Activated CD4-positive, alpha-beta T cell treated with anti-CD3 and anti-CD28 coated beads for 36 hours (primary cell): ENCODE measurements at regions of chr2 and their contacts with region 1.

Region 1: DNA sequence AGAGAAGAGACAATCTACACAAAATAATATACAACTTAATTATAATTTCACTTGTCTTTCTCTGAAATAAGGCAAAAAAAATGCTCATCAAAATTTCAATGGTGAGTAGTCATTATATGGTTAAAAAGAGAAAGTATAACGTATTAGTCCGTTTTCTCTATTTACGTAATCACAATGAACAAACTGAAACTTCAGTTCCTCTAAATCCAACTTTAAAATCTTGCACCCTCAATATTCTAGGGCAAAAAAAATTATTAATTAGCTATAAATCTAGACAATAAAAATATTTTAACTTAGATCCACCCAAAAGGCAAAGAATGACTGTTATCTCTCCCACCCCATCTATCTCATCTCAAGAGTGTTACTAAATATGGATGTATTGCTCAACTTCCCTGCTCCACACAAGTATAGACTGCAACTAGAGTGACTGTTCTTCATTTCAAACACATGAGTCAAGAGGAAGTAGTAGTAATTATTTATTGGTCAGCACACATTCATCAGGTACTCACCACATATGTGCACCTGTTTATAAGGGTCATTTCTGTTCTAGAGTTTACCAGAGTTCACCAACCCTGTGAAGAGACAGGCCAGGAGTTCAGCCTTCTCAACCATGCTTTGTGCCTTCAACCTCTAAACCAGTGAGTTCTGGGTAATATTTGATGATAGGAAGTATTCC is 36.4 kb downstream of the STK39 start:
- DNase-seq: no peak
- ATAC-seq: peak; percentile 62
- H3K4me3 Mint-ChIP-seq: peak overlapping the region; percentile 29
- H3K27ac Mint-ChIP-seq: peak overlapping the region; percentile 99
- H3K4me1 Mint-ChIP-seq: peaks cover 75% of the 10 kb centered on the region
- H3K27me3 Mint-ChIP-seq: no peaks in the 10 kb centered on the region

Region 2: DNA sequence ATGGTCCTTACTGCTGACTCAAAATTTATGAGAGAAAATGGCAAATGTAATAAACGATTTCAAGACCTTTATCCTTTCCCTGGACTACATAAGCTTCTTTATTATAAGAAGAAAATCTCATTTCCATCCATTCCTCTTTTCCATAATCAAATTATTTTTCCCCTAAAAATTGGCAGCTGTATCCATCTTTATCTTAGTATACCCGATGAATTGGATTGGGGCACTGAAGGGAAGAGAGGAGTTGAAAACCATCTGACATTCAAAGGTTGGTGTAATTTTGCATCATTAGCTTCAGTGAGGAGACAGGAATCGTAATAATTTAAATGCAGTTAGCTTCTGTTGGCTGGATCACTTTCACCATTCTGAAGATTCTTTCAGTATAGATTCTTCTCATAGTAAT is 748.7 kb before region 1 on chr2:
- CTCF ChIA-PET with region 1: no interaction called
- POLR2A ChIA-PET with region 1: no interaction called
- intact Hi-C with region 1: no loop called
- DNase-seq: no peak
- ATAC-seq: no peak
- H3K4me3 Mint-ChIP-seq: no peak overlapping the region
- H3K27ac Mint-ChIP-seq: no peak overlapping the region
- H3K4me1 Mint-ChIP-seq: no peaks in the 10 kb centered on the region
- H3K27me3 Mint-ChIP-seq: no peaks in the 10 kb centered on the region

Region 3: DNA sequence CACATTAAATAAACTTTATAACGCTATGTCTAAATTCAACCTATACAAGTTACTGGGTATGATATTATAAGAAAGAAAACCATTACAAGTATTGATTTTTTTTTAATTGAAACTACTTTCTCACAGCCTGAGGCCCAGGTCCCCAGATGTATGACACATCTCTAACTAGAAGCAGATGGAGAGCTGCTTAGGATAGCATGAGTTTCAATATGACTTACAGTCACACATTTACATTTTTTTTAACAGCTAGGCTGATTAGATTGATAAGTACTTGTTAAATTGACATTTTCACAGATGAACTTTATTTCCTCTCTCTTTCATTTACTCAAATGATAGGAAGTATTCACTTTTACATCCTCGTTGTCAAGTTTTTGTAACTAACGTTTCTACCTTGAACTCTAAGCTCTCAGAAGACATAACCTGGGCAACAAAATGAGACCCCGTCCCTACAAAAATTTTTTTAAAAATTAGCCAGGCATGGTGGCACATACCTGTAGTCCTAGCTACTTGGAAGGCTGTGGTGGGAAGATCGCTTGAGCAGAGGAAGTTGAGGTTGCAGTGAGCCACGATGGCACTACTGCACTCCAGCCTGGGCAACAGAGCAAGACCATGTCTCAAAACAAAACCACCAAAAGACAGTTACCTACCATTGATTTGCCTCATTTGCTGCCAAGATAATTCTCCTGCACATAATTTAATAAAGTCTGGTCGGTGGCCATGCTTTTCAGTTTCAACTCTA is 16.1 kb before region 1 on chr2:
- CTCF ChIA-PET with region 1: interaction called, 20 read pairs
- POLR2A ChIA-PET with region 1: interaction called, 18 read pairs
- intact Hi-C with region 1: loop called (anchors 1 kb)
- DNase-seq: peak; percentile 62
- ATAC-seq: peak; percentile 85
- H3K4me3 Mint-ChIP-seq: peak overlapping the region; percentile 54
- H3K27ac Mint-ChIP-seq: peak overlapping the region; percentile 95
- H3K4me1 Mint-ChIP-seq: peaks cover 80% of the 10 kb centered on the region
- H3K27me3 Mint-ChIP-seq: no peaks in the 10 kb centered on the region

Region 4: GRCh38 chr2:168233762-168234406 is 22.9 kb after region 1 on chr2:
- CTCF ChIA-PET with region 1: interaction called, 3 read pairs
- POLR2A ChIA-PET with region 1: interaction called, 6 read pairs
- intact Hi-C with region 1: loop called (anchors 1 kb)
- DNase-seq: no peak
- ATAC-seq: peak; percentile 81
- H3K4me3 Mint-ChIP-seq: no peak overlapping the region
- H3K27ac Mint-ChIP-seq: peak overlapping the region; percentile 85
- H3K4me1 Mint-ChIP-seq: peaks cover 43% of the 10 kb centered on the region
- H3K27me3 Mint-ChIP-seq: no peaks in the 10 kb centered on the region

Region 5: DNA sequence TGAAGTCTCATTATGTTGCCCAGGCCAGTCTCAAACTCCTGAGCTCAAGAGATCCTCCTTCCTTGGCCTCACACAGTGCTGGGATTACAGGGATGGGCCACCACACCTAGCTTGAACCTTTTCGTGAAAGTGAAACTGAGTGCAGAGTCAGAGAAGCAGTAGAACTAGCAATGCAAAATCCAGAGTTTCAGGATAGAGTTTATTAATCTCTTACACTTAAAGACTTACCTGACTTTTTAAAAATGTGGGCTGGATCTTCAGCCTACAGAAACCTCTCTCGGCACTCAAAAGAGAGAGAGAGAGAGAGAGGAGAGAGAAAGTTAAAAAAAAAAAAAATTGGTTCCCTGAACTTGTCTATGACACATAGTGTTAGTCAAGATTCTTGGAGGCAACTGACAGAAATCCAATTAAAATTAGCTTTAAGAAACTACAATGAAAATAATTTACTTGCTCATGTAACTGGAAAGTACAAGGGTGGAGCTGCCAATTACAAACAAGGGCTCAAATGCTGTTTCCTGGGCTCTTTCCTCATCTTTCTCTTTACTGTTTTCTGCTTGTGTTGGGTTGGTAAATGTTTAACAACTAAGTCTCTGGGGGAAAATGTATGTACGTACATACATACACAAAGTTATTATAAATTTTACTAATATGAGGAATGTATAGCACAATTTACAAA is 146.9 kb after region 1 on chr2:
- CTCF ChIA-PET with region 1: no interaction called
- POLR2A ChIA-PET with region 1: no interaction called
- intact Hi-C with region 1: no loop called
- DNase-seq: no peak
- ATAC-seq: no peak
- H3K4me3 Mint-ChIP-seq: no peak overlapping the region
- H3K27ac Mint-ChIP-seq: no peak overlapping the region
- H3K4me1 Mint-ChIP-seq: peaks cover 24% of the 10 kb centered on the region
- H3K27me3 Mint-ChIP-seq: no peaks in the 10 kb centered on the region

Region 6: DNA sequence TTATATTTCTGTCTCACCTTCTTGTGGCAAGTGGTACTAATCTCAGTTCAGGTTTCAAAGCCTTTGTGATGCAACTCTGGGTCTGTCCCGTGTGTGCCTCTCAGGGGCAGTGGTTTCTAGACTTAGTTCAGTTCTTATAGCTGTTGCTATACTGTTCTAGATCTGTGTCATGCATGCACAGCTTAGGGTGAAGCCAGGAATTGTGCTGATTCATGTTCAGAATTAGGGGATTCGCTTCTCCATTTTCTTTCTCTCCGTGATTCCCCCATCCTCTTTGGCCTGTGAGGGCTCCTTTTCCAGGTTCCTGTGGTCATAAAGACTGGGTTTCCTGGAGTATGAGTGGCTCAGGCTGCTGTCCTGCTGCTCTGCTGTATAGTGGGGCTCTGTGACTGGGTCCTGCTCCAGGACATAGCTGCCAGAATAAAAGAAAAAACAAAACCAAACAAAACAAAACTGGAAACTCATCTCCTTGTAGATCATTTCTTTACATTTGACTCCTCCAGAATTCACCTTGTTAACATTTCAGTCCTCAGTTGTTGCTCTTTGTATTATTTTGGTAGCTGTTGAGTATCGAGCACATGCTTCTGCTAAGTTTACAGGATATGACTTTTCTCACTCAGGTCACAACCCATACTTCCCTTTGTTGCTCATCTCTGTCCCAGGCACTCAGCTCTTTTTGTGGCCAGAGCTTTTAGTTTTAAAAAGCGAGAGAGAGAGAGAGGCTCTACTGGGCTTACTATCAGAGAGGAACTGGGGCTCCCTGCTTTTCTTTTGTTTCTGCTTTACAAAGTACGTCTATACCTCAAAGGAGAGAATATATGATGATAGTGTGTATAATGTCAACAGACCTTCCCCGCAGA is 279.2 kb after region 1 on chr2:
- CTCF ChIA-PET with region 1: interaction called, 6 read pairs
- POLR2A ChIA-PET with region 1: interaction called, 6 read pairs
- intact Hi-C with region 1: loop called (anchors 1 kb)
- DNase-seq: peak; percentile 78
- ATAC-seq: peak; percentile 92
- H3K4me3 Mint-ChIP-seq: peak overlapping the region; percentile 61
- H3K27ac Mint-ChIP-seq: peak overlapping the region; percentile 88
- H3K4me1 Mint-ChIP-seq: peaks cover 50% of the 10 kb centered on the region
- H3K27me3 Mint-ChIP-seq: peaks cover 7% of the 10 kb centered on the region

Region 7: GRCh38 chr2:168890006-168890782 is 679.2 kb after region 1 on chr2 and contains the start of gene SPC25:
- CTCF ChIA-PET with region 1: no interaction called
- POLR2A ChIA-PET with region 1: no interaction called
- intact Hi-C with region 1: loop called in 1 of 2 experiments (anchors 5 kb)
- DNase-seq: peak; percentile 94
- ATAC-seq: peak; percentile 100
- H3K4me3 Mint-ChIP-seq: peak within 1 kb of the TSS; percentile 84
- H3K27ac Mint-ChIP-seq: peak within 1 kb of the TSS; percentile 86
- H3K4me1 Mint-ChIP-seq: peaks cover 14% of the 10 kb centered on the region
- H3K27me3 Mint-ChIP-seq: no peaks in the 10 kb centered on the region
- total RNA-seq, gene SPC25: 33.7 to 38.4 TPM

Region 8: GRCh38 chr2:169069341-169069740 is 858.3 kb after region 1 on chr2 and contains the start of gene DHRS9:
- CTCF ChIA-PET with region 1: no interaction called
- POLR2A ChIA-PET with region 1: no interaction called
- intact Hi-C with region 1: loop called in 1 of 2 experiments (anchors 5 kb)
- DNase-seq: peak; percentile 67
- ATAC-seq: peak; percentile 88
- H3K4me3 Mint-ChIP-seq: peak within 1 kb of the TSS; percentile 69
- H3K27ac Mint-ChIP-seq: peak within 1 kb of the TSS; percentile 70
- H3K4me1 Mint-ChIP-seq: peaks cover 42% of the 10 kb centered on the region
- H3K27me3 Mint-ChIP-seq: no peaks in the 10 kb centered on the region
- total RNA-seq, gene DHRS9: 4.1 to 4.8 TPM

Region 9: GRCh38 chr2:169768262-169768995 is 1557.4 kb after region 1 on chr2:
- CTCF ChIA-PET with region 1: no interaction called
- POLR2A ChIA-PET with region 1: no interaction called
- intact Hi-C with region 1: no loop called
- DNase-seq: peak; percentile 48
- ATAC-seq: peak; percentile 47
- H3K4me3 Mint-ChIP-seq: peak overlapping the region; percentile 59
- H3K27ac Mint-ChIP-seq: no peak overlapping the region
- H3K4me1 Mint-ChIP-seq: peaks cover 9% of the 10 kb centered on the region
- H3K27me3 Mint-ChIP-seq: peaks cover 14% of the 10 kb centered on the region